ENCODE measurements at regions of chr13 and their contacts with region 1.

Region 1: DNA sequence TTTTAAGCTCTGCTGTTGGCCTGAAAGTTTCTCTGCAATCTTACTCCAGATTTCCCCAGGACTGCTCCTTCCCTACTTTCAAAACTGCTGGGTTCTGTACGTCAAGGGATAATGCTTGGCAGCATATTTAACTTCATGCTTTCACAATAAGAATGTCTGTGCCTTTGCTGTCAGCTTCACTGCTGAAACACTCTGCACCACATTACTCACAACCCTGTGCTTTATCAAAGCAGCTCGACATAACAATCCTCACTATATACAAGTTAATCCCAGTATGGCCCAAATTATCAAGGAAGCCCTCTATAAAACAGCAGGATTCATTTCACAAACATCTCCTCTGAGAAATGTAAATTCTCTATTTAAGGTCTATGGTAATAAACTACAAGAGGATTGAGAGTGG is 17.5 kb downstream of the LATS2 start:
- DNase-seq: no peak
- CTCF ChIP-seq: no peak

Region 2: DNA sequence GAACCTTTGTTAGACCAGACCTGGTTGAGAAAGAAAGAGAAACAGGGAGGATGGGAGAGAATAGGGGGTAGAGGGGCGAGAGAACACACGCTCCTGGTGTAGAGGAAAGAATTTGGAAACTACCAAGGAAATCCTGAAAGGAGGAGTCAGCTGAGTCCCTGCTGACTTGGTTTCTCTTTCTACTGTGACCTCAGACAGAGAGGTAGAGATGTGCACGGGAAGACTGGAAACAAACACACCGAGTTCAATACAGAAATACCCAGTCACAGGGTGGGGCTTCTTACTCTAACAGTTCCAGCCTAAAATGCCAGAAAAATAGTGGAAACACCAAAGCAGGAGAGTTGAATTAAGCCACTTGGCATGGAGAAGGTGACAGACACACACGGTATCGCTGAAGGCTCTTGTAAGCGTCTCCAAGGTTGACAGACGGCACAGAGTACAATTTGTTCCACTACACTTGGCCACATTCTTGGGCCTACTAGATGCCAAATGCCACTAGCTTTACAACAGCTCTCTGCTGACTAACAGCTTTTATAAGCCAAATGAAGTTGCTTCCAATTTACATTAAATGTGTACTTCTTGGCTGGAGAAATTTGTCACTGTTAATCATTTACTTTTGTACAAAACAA is 10.6 kb before region 1 on chr13:
- CTCF ChIA-PET with region 1: interaction called, 10 read pairs
- POLR2A ChIA-PET with region 1: no interaction called
- DNase-seq: no peak
- CTCF ChIP-seq: no peak

Measured in GM10248 (cell line).